ENCODE measurements at regions of chr2 and their contacts with region 1.

Region 1: GRCh38 chr2:29309090-29310029 is 194.1 kb downstream of the CLIP4 start:
- DNase-seq: peak in 1 of 3 donors; percentile 66
- ATAC-seq: peak; percentile 84 to 87 (median 86)
- H3K4me3 ChIP-seq: no peak overlapping the region
- H3K27ac ChIP-seq: no peak overlapping the region
- H3K4me1 ChIP-seq: no peaks in the 10 kb centered on the region
- H3K27me3 ChIP-seq: no peaks in the 10 kb centered on the region
- CTCF ChIP-seq: peak; percentile 61 to 79 (median 70)
- POLR2A ChIP-seq: no peak

Region 2: GRCh38 chr2:29351916-29352591 is 42.7 kb after region 1 on chr2:
- intact Hi-C with region 1: no loop called
- DNase-seq: no peak
- ATAC-seq: no peak
- H3K4me3 ChIP-seq: no peak overlapping the region
- H3K27ac ChIP-seq: no peak overlapping the region
- H3K4me1 ChIP-seq: no peaks in the 10 kb centered on the region
- H3K27me3 ChIP-seq: no peaks in the 10 kb centered on the region
- CTCF ChIP-seq: no peak
- POLR2A ChIP-seq: no peak

Region 3: GRCh38 chr2:29841386-29842004 is 532.1 kb after region 1 on chr2:
- intact Hi-C with region 1: loop called in 1 of 2 experiments (anchors 10 kb)
- DNase-seq: no peak
- ATAC-seq: peak; percentile 74 to 83 (median 81)
- H3K4me3 ChIP-seq: no peak overlapping the region
- H3K27ac ChIP-seq: no peak overlapping the region
- H3K4me1 ChIP-seq: no peaks in the 10 kb centered on the region
- H3K27me3 ChIP-seq: no peaks in the 10 kb centered on the region
- CTCF ChIP-seq: peak; percentile 84 to 89 (median 88)
- POLR2A ChIP-seq: no peak

Measured in right lobe of liver (tissue), 6 donors.